Naive thymus-derived CD4-positive, alpha-beta T cell (primary cell): ENCODE measurements at regions of chr3 and their contacts with region 1.

Region 1: GRCh38 chr3:31213869-31214486 is 318.7 kb upstream of the STT3B start:
- DNase-seq: peak in 7 of 9 donors; percentile 57 to 86 (median 76)
- ATAC-seq: peak; percentile 86
- H3K4me3 ChIP-seq: no peak overlapping the region
- H3K4me3 Mint-ChIP-seq: peak overlapping the region; percentile 34 to 82 (median 69)
- H3K27ac ChIP-seq: no peak overlapping the region
- H3K27ac Mint-ChIP-seq: peak overlapping the region; percentile 26 to 89 (median 64)
- H3K4me1 ChIP-seq: peaks cover 48 to 49% of the 10 kb centered on the region in 2 donors
- H3K4me1 Mint-ChIP-seq: peaks cover 53 to 99% (median 98%) of the 10 kb centered on the region in 7 donors
- H3K27me3 ChIP-seq: no peaks in the 10 kb centered on the region
- H3K27me3 Mint-ChIP-seq: peaks cover 0 to 2% (median 0%) of the 10 kb centered on the region in 5 donors

Region 2: DNA sequence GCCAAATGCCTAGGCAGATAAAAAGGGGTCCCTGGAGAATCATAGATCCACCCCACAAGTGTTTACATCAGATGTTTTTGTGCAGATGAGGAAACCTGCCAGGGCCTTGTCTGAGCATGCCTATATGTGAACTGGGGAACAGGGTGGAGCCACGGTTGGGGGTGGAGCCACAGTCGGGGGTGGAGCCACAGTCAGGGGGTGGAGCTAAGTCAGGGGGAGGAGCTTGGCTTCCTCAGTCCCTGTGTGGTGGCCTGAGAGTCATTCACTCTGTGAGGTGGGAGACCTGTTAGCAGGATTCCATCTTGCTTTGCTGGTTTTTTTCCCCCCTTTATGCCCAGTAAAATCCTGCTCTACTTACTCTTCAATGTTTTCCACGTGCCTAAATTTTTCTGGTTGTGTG is 665.4 kb before region 1 on chr3:
- CTCF ChIA-PET with region 1: no interaction called
- POLR2A ChIA-PET with region 1: no interaction called
- intact Hi-C with region 1: no loop called
- DNase-seq: peak in 2 of 9 donors; percentile 8 to 23
- ATAC-seq: no peak
- H3K4me3 ChIP-seq: no peak overlapping the region
- H3K4me3 Mint-ChIP-seq: no peak overlapping the region
- H3K27ac ChIP-seq: no peak overlapping the region
- H3K27ac Mint-ChIP-seq: no peak overlapping the region
- H3K4me1 ChIP-seq: no peaks in the 10 kb centered on the region
- H3K4me1 Mint-ChIP-seq: peaks cover 0 to 17% (median 7%) of the 10 kb centered on the region in 7 donors
- H3K27me3 ChIP-seq: no peaks in the 10 kb centered on the region
- H3K27me3 Mint-ChIP-seq: no peaks in the 10 kb centered on the region

Region 3: DNA sequence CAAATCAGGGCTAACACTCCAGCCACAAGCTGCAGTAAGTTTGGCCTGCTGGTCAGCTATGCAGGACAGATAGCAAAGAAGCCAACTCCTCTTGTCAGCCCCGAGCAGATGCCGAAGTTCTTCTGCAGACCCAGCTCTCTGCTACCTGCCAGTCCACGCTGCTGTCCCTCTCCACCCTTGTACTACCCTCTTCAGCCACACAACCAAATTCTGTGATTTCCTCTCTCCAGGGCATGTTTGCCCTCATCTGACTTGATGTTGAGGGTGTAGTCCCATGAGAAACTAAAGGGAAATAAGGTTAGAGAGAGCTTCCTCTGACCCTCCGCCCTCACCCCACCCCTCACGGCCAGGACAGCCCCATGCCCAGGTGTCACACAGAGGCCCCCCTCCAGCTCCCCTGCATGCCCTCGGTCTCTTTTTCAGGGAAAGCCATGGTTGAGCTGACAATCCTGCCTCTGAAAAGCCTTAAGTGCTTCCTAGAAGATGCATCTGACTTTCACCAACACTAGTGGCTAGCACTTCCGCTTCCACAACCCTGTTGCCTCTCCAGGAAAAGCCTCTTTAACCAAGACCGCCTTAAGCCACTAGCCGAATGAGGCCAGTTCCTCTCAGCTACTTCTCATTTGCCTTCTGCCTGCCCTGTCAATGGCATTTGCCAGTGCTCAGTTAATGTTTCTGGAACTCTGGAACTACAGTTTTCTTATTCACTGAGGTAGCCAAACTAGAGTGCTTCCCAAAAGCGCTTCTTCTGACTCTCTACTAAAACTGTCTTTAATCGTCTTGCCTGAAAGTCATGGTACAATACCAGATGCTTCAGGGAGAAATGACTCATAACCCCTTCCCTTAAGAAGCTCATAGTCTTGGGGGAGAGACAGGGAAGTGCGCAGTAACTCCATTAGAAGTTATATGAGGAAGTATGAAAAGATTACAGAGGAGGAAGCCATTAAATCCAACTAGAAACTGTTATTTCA is 18.4 kb after region 1 on chr3:
- CTCF ChIA-PET with region 1: interaction called, 4 read pairs
- POLR2A ChIA-PET with region 1: interaction called, 42 read pairs
- intact Hi-C with region 1: loop called (anchors 1 kb)
- DNase-seq: no peak
- ATAC-seq: peak; percentile 74
- H3K4me3 ChIP-seq: no peak overlapping the region
- H3K4me3 Mint-ChIP-seq: peak overlapping the region; percentile 7 to 68 (median 62)
- H3K27ac ChIP-seq: no peak overlapping the region
- H3K27ac Mint-ChIP-seq: peak overlapping the region; percentile 30 to 95 (median 67)
- H3K4me1 ChIP-seq: peaks cover 34 to 64% of the 10 kb centered on the region in 2 donors
- H3K4me1 Mint-ChIP-seq: peaks cover 59 to 81% (median 76%) of the 10 kb centered on the region in 7 donors
- H3K27me3 ChIP-seq: no peaks in the 10 kb centered on the region
- H3K27me3 Mint-ChIP-seq: no peaks in the 10 kb centered on the region

Region 4: GRCh38 chr3:31250116-31250777 is 36.3 kb after region 1 on chr3:
- CTCF ChIA-PET with region 1: no interaction called
- POLR2A ChIA-PET with region 1: no interaction called
- intact Hi-C with region 1: loop called in 1 of 2 experiments (anchors 1 kb)
- DNase-seq: no peak
- ATAC-seq: no peak
- H3K4me3 ChIP-seq: no peak overlapping the region
- H3K4me3 Mint-ChIP-seq: peak overlapping the region in 1 of 10 donors; percentile 4
- H3K27ac ChIP-seq: no peak overlapping the region
- H3K27ac Mint-ChIP-seq: peak overlapping the region in 1 of 9 donors; percentile 65
- H3K4me1 ChIP-seq: peaks cover 0 to 5% of the 10 kb centered on the region in 2 donors
- H3K4me1 Mint-ChIP-seq: peaks cover 14 to 66% (median 26%) of the 10 kb centered on the region in 7 donors
- H3K27me3 ChIP-seq: no peaks in the 10 kb centered on the region
- H3K27me3 Mint-ChIP-seq: no peaks in the 10 kb centered on the region

Region 5: GRCh38 chr3:31288641-31289100 is 74.7 kb after region 1 on chr3:
- CTCF ChIA-PET with region 1: no interaction called
- POLR2A ChIA-PET with region 1: no interaction called
- intact Hi-C with region 1: loop called in 1 of 2 experiments (anchors 2 kb)
- DNase-seq: peak in 1 of 9 donors; percentile 55
- ATAC-seq: no peak
- H3K4me3 ChIP-seq: no peak overlapping the region
- H3K4me3 Mint-ChIP-seq: peak overlapping the region in 1 of 10 donors; percentile 53
- H3K27ac ChIP-seq: no peak overlapping the region
- H3K27ac Mint-ChIP-seq: peak overlapping the region in 1 of 9 donors; percentile 75
- H3K4me1 ChIP-seq: no peaks in the 10 kb centered on the region
- H3K4me1 Mint-ChIP-seq: peaks cover 6 to 39% (median 23%) of the 10 kb centered on the region in 7 donors
- H3K27me3 ChIP-seq: no peaks in the 10 kb centered on the region
- H3K27me3 Mint-ChIP-seq: no peaks in the 10 kb centered on the region

Region 6: GRCh38 chr3:31462050-31462569 is 248.1 kb after region 1 on chr3:
- CTCF ChIA-PET with region 1: no interaction called
- POLR2A ChIA-PET with region 1: interaction called, 3 read pairs
- intact Hi-C with region 1: loop called in 1 of 2 experiments (anchors 2 kb)
- DNase-seq: peak in 7 of 9 donors; percentile 78 to 93 (median 86)
- ATAC-seq: peak; percentile 93
- H3K4me3 ChIP-seq: peak overlapping the region; percentile 49
- H3K4me3 Mint-ChIP-seq: peak overlapping the region; percentile 28 to 95 (median 78)
- H3K27ac ChIP-seq: peak overlapping the region; percentile 68
- H3K27ac Mint-ChIP-seq: peak overlapping the region; percentile 70 to 100 (median 96)
- H3K4me1 ChIP-seq: peaks cover 49 to 59% of the 10 kb centered on the region in 2 donors
- H3K4me1 Mint-ChIP-seq: peaks cover 14 to 79% (median 68%) of the 10 kb centered on the region in 7 donors
- H3K27me3 ChIP-seq: no peaks in the 10 kb centered on the region
- H3K27me3 Mint-ChIP-seq: no peaks in the 10 kb centered on the region